ENCODE measurements at regions of chr12 and their contacts with region 1.

Region 1: GRCh38 chr12:21486000-21486399 is 15.4 kb downstream of the RECQL start:
- H3K4me3 Mint-ChIP-seq: no peak overlapping the region
- H3K27ac Mint-ChIP-seq: no peak overlapping the region
- H3K4me1 Mint-ChIP-seq: peaks cover 14% of the 10 kb centered on the region
- H3K27me3 Mint-ChIP-seq: no peaks in the 10 kb centered on the region

Region 2: DNA sequence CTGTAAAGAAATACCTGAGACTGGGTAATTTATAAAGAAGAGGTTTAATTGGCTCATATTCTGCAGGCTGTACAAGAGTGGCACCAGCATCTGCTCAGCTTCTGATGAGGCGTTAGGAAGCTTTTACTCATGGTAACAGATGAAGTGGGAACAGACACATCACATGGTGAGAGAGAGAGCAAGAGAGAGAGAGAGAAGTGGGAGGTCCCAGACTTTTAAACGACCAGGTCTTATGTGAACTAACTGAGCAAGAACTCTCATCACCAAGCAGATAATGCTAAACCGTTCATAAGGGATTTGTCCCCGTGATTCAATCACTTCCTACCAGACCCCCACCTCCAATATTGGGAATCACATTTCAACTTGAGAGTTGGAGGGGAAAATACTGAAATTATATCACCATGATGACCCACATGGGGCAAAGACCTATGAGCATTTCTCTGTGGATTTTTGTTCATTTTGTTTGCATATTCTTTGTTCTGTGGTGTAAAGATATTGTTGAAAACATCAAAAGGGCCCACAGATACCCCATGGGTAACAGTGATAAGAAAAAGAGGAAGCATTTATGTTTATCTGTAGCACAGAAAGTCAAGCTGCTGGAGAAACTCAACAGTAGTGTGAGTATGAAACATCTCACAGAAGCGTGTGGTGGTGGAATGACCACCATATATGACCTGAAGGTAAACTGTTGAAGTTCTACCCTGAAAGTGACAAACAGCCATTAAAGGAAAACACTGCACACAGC is 1252.9 kb before region 1 on chr12:
- intact Hi-C with region 1: no loop called
- H3K4me3 Mint-ChIP-seq: no peak overlapping the region
- H3K27ac Mint-ChIP-seq: no peak overlapping the region
- H3K4me1 Mint-ChIP-seq: no peaks in the 10 kb centered on the region
- H3K27me3 Mint-ChIP-seq: no peaks in the 10 kb centered on the region

Region 3: DNA sequence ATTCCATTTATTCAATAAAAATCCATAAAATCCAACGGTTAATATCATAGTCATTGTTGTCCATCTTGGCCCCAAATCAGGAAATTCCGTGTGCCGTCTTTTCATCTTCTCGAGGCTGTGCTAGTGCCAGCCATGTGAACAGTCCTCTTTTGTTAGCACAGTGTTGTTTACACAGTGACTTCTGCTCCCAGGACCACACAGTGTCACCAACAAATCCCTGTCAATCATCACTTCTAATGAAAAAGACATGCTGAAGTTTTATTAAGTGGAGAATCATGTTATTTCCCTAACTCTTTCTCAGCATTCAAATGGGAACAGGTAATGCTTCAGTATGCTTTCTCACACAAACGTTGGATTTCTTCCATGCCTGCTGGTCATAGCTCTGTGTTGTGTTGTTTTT is 149.3 kb before region 1 on chr12:
- intact Hi-C with region 1: no loop called
- H3K4me3 Mint-ChIP-seq: no peak overlapping the region
- H3K27ac Mint-ChIP-seq: no peak overlapping the region
- H3K4me1 Mint-ChIP-seq: no peaks in the 10 kb centered on the region
- H3K27me3 Mint-ChIP-seq: no peaks in the 10 kb centered on the region

Region 4: DNA sequence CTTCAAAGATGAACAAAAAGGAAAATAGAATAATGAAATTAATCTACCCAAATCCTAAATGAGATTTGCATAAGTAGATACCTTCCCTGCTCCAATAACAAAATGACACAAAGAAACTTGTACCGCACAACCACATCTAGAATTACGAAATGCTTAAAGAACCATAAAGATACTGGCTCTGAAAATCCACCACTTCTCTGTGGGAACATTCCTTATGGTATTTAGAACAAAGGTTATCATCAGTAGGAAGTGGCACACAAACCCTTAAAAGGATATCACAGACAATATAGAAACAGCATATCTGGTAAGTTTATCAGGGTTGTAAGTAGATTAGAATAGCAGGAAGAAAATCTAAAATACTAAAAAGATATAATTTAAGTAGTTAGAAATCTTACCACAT is 101.7 kb before region 1 on chr12:
- intact Hi-C with region 1: no loop called
- H3K4me3 Mint-ChIP-seq: no peak overlapping the region
- H3K27ac Mint-ChIP-seq: no peak overlapping the region
- H3K4me1 Mint-ChIP-seq: no peaks in the 10 kb centered on the region
- H3K27me3 Mint-ChIP-seq: no peaks in the 10 kb centered on the region

Region 5: DNA sequence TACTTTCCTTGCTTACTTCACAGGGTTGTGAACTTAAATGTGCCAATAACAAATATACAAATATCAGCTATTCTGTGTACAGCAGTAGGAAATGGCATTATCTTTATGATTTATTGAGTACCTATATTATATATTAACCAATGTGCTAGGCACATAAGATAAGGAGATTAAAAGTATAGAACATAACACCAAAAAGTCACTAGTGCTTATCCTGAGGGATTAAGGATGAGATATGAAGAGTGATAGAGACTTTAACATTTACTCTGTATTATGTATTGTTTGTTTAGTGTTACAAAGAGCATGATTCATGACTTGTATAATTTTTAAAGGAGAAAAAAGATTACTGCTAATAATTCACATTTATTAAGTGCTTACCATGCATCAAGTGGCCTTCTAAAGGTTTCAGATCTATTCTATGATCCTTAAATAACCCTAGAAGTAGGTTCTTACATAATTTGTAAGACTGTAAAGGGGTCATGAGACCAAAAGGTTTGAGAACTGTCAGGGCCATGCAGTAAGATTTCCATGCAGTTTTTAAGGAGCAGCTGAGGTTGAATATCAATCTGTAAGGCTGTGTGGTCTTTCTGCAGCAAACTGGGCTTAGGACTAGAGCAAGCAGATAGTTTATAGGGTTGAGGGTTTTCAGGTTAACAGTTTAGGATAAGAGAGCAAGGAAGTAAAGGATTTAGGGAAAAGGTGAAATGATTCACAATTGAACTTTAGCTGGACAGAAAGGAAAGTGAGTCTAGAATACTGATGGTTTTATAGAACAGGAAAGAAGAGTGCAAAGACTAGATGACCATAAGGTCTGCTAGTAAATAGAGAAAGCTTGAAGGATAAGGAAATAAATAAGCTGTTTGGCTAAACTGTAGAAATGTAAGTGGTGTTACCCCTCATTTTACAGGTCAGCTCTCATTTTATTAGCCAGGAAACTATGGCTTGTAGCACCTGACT is 41.5 kb before region 1 on chr12:
- intact Hi-C with region 1: loop called (anchors 5 kb)
- H3K4me3 Mint-ChIP-seq: no peak overlapping the region
- H3K27ac Mint-ChIP-seq: no peak overlapping the region
- H3K4me1 Mint-ChIP-seq: peaks cover 22% of the 10 kb centered on the region
- H3K27me3 Mint-ChIP-seq: no peaks in the 10 kb centered on the region

Region 6: GRCh38 chr12:21542403-21542802 is 56.4 kb after region 1 on chr12:
- intact Hi-C with region 1: no loop called
- H3K4me3 Mint-ChIP-seq: no peak overlapping the region
- H3K27ac Mint-ChIP-seq: no peak overlapping the region
- H3K4me1 Mint-ChIP-seq: no peaks in the 10 kb centered on the region
- H3K27me3 Mint-ChIP-seq: peaks cover 2% of the 10 kb centered on the region

Measured in dendritic cell treated with granulocyte-macrophage colony-stimulating factor and Interleukin-4, amounts not matched to agents 40 ng/mL and 50 ng/mL, for 4 days (primary cell).